H1 (cell line): ENCODE measurements at regions of chr7 and their contacts with region 1.

Region 1: DNA sequence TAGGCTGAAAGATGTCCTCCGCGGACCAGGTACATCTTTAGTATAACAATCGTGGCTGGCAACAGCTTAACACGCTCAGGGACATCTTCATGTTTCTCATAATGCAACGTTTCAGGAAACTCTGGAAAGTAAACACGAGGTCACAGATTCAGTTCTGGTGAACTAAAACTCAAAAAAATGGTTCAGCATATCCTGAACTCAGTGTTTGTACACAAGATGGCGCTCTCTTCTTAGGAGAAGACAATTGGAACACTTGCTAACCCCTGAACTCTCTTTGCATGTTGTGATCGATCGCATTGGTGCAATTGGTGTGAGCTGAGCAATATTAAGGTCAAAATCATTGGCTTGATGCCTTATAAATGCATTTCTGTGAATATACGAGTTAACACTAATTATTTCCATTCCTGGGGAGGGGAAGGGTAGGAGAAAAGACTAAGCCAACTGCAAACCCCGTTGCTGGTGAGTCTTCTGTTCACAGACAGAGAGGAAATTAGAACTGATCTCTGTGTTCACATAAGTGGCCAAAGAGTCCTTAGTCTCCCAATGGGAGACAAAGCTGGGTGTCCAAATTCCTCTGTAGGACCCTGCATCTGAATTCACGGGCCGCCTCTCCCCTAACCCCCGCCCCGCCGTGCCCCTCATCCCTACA is 52.6 kb upstream of the FAM180A start:
- DNase-seq: peak in 1 of 2 experiments; percentile 49
- H3K4me3 ChIP-seq: peak overlapping the region in 1 of 4 experiments; percentile 30; a peak in 1 of 8 replicates
- H3K27ac ChIP-seq: no peak overlapping the region
- H3K4me1 ChIP-seq: peaks cover 0 to 2% (median 2%) of the 10 kb centered on the region in 4 experiments; a peak in 3 of 7 replicates
- H3K27me3 ChIP-seq: no peaks in the 10 kb centered on the region; a peak in 1 of 7 replicates
- CTCF ChIP-seq: peak in 2 of 3 experiments; percentile 76 to 87; a peak in 3 of 4 replicates
- EP300 ChIP-seq: no peak
- POLR2A ChIP-seq: no peak
- RAD21 ChIP-seq: peak; percentile 98

Region 2: GRCh38 chr7:135672560-135673359 is 128.4 kb before region 1 on chr7:
- CTCF ChIA-PET with region 1: interaction called, 49 read pairs
- POLR2A ChIA-PET with region 1: no interaction called
- DNase-seq: no peak
- H3K4me3 ChIP-seq: no peak overlapping the region
- H3K27ac ChIP-seq: no peak overlapping the region
- H3K4me1 ChIP-seq: no peaks in the 10 kb centered on the region
- H3K27me3 ChIP-seq: no peaks in the 10 kb centered on the region
- CTCF ChIP-seq: peak in 2 of 3 experiments; percentile 67 to 82; a peak in 3 of 4 replicates
- EP300 ChIP-seq: no peak
- POLR2A ChIP-seq: no peak
- RAD21 ChIP-seq: peak; percentile 71 to 75

Region 3: DNA sequence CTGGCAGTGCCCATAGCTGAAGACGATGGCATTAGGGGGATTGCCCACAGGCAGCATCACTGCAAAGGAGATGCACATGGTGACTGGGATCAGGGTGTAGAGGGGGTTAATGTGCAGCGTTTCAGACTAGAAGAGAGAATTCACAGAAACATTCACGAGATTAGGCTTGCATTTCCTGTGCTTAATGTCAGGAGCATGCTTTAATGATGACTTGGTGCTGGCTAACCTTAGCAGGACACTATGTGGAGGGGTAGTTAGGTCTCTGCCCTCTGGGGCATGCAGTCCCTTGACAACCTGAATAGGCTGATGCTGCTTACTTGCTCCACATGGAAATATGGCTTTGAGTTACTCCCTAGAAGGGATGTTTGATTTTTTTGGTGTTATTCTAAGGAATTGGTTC is 117.0 kb before region 1 on chr7:
- CTCF ChIA-PET with region 1: interaction called, 11 read pairs
- POLR2A ChIA-PET with region 1: no interaction called
- DNase-seq: no peak
- H3K4me3 ChIP-seq: no peak overlapping the region
- H3K27ac ChIP-seq: no peak overlapping the region
- H3K4me1 ChIP-seq: peaks cover 0 to 3% (median 0%) of the 10 kb centered on the region in 4 experiments; a peak in 2 of 7 replicates
- H3K27me3 ChIP-seq: no peaks in the 10 kb centered on the region
- CTCF ChIP-seq: no peak
- EP300 ChIP-seq: no peak
- POLR2A ChIP-seq: no peak
- RAD21 ChIP-seq: no peak

Region 4: DNA sequence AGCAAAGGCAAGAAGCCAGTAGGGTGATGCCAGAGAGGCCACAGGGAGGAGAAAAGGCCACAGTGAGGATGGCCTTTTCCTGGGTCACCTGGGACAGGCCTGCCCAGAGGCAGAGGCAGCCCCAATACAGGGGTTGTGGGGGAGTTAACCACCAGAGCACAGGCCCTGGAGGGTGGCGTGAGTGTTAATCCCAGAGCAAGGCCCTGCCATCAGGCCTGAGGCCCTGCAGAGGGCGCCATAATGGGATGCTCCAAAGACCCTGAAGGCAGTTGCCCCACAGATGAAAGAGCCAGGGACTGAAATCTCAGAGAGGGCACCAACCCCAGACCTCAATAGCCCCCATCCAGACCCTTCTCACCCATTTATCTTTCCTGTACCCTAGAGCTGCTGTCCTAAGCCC is 97.1 kb before region 1 on chr7:
- CTCF ChIA-PET with region 1: interaction called, 24 read pairs
- POLR2A ChIA-PET with region 1: no interaction called
- DNase-seq: peak in 1 of 2 experiments; percentile 82
- H3K4me3 ChIP-seq: no peak overlapping the region
- H3K27ac ChIP-seq: no peak overlapping the region
- H3K4me1 ChIP-seq: no peaks in the 10 kb centered on the region; a peak in 1 of 7 replicates
- H3K27me3 ChIP-seq: no peaks in the 10 kb centered on the region
- CTCF ChIP-seq: peak; percentile 84 to 91 (median 91)
- EP300 ChIP-seq: no peak
- POLR2A ChIP-seq: no peak
- RAD21 ChIP-seq: peak; percentile 63 to 75

Region 5: GRCh38 chr7:135817583-135817982 is 16.4 kb after region 1 on chr7:
- CTCF ChIA-PET with region 1: interaction called, 23 read pairs
- POLR2A ChIA-PET with region 1: no interaction called
- DNase-seq: no peak
- H3K4me3 ChIP-seq: no peak overlapping the region
- H3K27ac ChIP-seq: no peak overlapping the region
- H3K4me1 ChIP-seq: no peaks in the 10 kb centered on the region
- H3K27me3 ChIP-seq: no peaks in the 10 kb centered on the region
- CTCF ChIP-seq: no peak
- EP300 ChIP-seq: no peak
- POLR2A ChIP-seq: no peak
- RAD21 ChIP-seq: no peak

Region 6: DNA sequence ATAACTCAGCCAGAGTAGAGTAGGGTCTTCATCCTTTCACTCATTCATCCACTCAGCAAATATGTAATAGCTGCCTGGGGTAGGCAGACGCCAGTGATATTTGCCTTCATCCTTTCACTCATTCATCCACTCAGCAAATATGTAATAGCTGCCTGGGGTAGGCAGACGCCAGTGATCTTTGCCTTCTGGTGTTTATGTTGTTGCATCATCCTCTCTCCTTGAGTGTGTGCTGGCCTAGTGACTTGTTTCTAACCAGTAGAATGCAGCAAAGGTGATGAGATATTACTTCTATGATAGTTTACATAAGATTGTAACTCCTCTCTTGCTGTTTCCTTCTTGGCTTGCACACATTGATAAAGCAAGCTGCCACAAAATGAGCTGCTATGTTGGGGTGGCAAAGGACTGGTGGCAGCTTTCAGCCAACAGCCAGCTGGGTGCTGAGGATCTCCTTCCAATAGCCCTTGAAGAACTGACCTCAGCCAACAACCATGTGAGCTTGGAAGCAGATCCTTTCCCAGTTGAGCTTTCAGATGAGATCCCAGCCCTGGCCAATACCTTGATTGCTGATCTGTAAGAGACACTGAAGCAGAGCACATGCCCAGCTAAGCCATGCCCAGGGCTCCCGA is 199.2 kb after region 1 on chr7:
- CTCF ChIA-PET with region 1: interaction called, 16 read pairs
- POLR2A ChIA-PET with region 1: no interaction called
- DNase-seq: no peak
- H3K4me3 ChIP-seq: no peak overlapping the region
- H3K27ac ChIP-seq: no peak overlapping the region
- H3K4me1 ChIP-seq: no peaks in the 10 kb centered on the region
- H3K27me3 ChIP-seq: no peaks in the 10 kb centered on the region
- CTCF ChIP-seq: no peak
- EP300 ChIP-seq: no peak
- POLR2A ChIP-seq: no peak
- RAD21 ChIP-seq: no peak

Region 7: DNA sequence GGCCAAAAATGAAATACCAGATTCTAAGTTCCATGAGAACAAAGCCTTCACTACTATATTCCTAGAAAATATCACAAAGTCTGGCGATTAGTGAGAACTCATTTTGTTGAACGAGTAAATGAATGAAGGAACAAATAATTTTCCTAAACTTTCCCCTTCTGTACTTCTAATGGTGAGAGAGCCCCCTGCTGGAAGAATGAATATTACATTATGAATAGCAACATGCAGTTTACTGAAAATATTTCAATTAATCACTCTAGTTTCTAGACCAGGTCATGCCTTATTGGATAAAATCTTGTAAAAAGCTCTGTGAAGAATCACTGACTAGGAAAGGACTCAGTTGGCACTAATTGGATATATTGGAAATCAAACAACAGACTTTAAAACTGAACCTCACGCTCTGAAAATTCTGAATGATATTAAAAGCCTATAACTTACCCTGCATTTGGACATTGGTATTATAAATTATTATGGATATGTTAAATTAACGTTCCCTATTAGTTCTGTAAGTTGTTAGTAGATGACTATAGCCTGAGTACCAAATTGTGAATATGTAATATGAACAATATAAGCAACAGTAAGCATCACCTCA is 208.4 kb after region 1 on chr7:
- CTCF ChIA-PET with region 1: interaction called, 25 read pairs
- POLR2A ChIA-PET with region 1: interaction called, 3 read pairs
- DNase-seq: no peak
- H3K4me3 ChIP-seq: no peak overlapping the region
- H3K27ac ChIP-seq: no peak overlapping the region
- H3K4me1 ChIP-seq: no peaks in the 10 kb centered on the region
- H3K27me3 ChIP-seq: no peaks in the 10 kb centered on the region
- CTCF ChIP-seq: peak in 2 of 3 experiments; percentile 27 to 46; a peak in 2 of 4 replicates
- EP300 ChIP-seq: no peak
- POLR2A ChIP-seq: no peak
- RAD21 ChIP-seq: peak; percentile 62 to 64